Naive thymus-derived CD4-positive, alpha-beta T cell (primary cell): ENCODE measurements at regions of chr7 and their contacts with region 1.

Region 1: DNA sequence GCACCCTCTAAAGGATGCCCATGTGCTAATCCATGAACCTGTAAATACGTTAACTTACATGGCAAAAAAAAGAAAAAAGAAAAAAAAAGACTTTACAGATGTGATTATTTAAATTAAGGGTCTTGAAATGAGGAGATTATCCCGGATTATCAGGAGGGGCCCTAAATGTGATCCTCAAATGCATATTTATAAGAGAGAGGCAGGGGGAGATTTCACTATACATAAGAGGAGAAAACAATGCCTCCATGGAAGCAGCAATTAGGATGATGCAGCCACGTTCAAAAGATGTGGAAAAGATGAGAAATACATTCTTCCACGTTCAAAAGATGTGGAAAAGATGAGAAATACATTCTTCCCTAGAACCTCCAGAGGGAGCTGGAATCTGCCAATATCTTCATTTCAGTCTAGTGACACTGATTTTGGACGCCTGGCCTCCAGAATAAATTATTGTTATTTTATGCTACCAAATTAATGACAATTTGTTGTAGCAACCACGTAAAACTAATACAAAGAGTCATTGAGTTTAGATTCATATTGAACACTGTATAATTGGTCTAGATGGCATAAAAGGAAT is 328.4 kb upstream of the GNAI1 start:
- DNase-seq: no peak
- ATAC-seq: no peak
- H3K4me3 ChIP-seq: no peak overlapping the region
- H3K4me3 Mint-ChIP-seq: no peak overlapping the region
- H3K27ac ChIP-seq: no peak overlapping the region
- H3K27ac Mint-ChIP-seq: no peak overlapping the region
- H3K4me1 ChIP-seq: no peaks in the 10 kb centered on the region
- H3K4me1 Mint-ChIP-seq: no peaks in the 10 kb centered on the region
- H3K27me3 ChIP-seq: no peaks in the 10 kb centered on the region
- H3K27me3 Mint-ChIP-seq: no peaks in the 10 kb centered on the region

Region 2: DNA sequence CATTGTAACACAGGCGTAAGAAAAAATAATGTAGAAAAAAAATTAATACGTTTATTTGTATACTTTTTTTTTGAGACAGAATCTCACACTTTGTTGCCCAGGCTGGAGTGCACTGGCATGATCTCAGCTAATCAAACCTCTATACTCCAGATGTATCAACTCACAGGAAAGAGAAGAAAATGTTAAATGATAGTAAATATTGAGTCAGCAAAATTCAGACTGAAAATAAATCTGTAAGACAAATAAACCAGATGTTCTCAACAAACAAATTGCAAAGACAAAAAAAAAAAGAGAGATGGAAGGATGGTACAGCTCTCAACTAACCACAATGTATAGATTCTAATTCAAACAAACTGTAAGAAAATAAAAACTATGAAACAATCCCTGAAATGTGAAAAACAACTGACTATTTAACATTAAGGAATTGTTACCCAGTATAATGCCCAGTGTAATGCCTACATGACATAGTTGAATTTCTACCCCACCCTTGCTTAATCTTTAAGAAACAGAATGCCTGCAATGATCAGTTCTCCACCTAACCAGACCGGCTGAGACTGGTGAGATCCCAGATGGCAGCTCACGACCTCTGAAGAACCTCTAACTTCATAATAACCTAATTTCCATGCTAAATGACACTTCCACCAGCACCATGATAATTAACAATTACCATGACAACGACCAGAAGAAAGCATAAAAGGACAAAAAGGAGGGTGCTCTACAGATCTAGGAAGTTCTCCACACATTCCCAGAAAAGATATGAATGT is 56.4 kb after region 1 on chr7:
- CTCF ChIA-PET with region 1: no interaction called
- POLR2A ChIA-PET with region 1: no interaction called
- intact Hi-C with region 1: loop called in 1 of 2 experiments (anchors 5 kb)
- DNase-seq: no peak
- ATAC-seq: no peak
- H3K4me3 ChIP-seq: no peak overlapping the region
- H3K4me3 Mint-ChIP-seq: no peak overlapping the region
- H3K27ac ChIP-seq: no peak overlapping the region
- H3K27ac Mint-ChIP-seq: no peak overlapping the region
- H3K4me1 ChIP-seq: no peaks in the 10 kb centered on the region
- H3K4me1 Mint-ChIP-seq: peaks cover 0 to 4% (median 0%) of the 10 kb centered on the region in 7 donors
- H3K27me3 ChIP-seq: no peaks in the 10 kb centered on the region
- H3K27me3 Mint-ChIP-seq: no peaks in the 10 kb centered on the region